ENCODE measurements at regions of chr2 and their contacts with region 1.

Region 1: GRCh38 chr2:205680067-205680466 is 2.2 kb upstream of the NRP2 start:
- DNase-seq: peak in 6 of 7 donors; percentile 60 to 84 (median 70)
- H3K4me3 ChIP-seq: no peak overlapping the region
- H3K27ac ChIP-seq: no peak overlapping the region
- H3K4me1 ChIP-seq: peaks cover 0 to 16% of the 10 kb centered on the region in 2 donors
- H3K27me3 ChIP-seq: no peaks in the 10 kb centered on the region
- CTCF ChIP-seq: peak; percentile 55 to 70 (median 66)
- POLR2A ChIP-seq: no peak

Region 2: DNA sequence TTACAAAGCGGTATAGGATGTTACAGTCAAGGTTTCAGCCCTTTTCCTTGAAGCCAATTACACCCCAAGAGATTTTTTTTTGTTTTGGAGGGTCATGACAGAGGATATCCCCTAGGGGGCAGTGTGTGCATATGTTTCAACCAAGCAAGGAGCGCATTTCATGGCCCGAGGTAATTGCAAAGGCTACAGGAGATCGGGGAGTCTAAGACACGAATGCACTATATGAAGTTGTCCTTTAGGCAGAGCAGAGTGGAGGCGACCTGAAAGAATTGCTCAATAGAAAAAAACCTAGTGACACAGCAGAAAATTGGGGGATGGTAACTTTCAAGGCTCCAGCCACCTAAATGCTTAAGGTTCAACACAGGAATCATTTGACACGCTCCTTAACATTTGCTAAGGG is 1354.6 kb before region 1 on chr2:
- intact Hi-C with region 1: loop called in 1 of 2 experiments (anchors 5 kb)
- DNase-seq: peak; percentile 57 to 81 (median 68)
- H3K4me3 ChIP-seq: no peak overlapping the region
- H3K27ac ChIP-seq: no peak overlapping the region
- H3K4me1 ChIP-seq: no peaks in the 10 kb centered on the region
- H3K27me3 ChIP-seq: no peaks in the 10 kb centered on the region
- CTCF ChIP-seq: peak; percentile 80 to 94 (median 88)
- POLR2A ChIP-seq: no peak

Region 3: GRCh38 chr2:204860274-204860673 is 819.8 kb before region 1 on chr2:
- intact Hi-C with region 1: loop called in 1 of 2 experiments (anchors 10 kb)
- DNase-seq: no peak
- H3K4me3 ChIP-seq: no peak overlapping the region
- H3K27ac ChIP-seq: no peak overlapping the region
- H3K4me1 ChIP-seq: no peaks in the 10 kb centered on the region
- H3K27me3 ChIP-seq: no peaks in the 10 kb centered on the region
- CTCF ChIP-seq: no peak
- POLR2A ChIP-seq: no peak

Region 4: DNA sequence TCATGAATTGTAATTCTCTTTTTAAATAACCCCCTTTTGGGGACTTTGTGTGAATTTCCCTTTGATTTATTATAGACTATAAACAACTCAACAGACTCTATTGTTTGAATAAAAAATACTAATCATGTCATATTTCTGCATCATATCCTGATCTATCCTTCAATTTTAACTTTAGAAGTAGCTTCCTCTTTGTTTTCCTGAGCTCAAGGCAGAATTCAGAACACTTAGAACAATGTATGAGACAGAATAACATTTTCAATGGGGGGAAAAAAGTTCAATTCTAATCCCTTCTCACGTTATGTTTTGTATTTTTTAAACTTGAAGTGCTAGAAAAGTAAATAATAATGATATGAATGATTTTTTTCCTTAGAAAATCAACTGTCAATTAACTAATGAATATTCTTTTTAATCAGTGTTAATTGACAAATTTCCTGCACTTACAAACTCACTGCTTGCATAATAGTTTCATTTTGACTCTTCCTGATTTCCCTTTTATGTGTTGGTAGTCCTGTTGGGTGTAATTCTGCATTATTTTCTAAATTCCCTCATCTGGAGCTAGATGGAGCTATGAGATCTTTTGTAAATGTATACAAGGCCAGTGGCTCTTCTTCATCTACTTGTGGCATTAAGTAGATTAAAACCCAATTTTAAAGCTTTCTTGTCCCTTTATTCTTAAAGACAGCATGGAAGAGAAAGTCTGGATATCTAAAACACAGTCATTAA is 808.7 kb before region 1 on chr2:
- intact Hi-C with region 1: loop called (anchors 10 kb)
- DNase-seq: no peak
- H3K4me3 ChIP-seq: no peak overlapping the region
- H3K27ac ChIP-seq: no peak overlapping the region
- H3K4me1 ChIP-seq: peaks cover 0 to 26% of the 10 kb centered on the region in 2 donors
- H3K27me3 ChIP-seq: no peaks in the 10 kb centered on the region
- CTCF ChIP-seq: peak; percentile 29 to 54 (median 43)
- POLR2A ChIP-seq: no peak

Region 5: DNA sequence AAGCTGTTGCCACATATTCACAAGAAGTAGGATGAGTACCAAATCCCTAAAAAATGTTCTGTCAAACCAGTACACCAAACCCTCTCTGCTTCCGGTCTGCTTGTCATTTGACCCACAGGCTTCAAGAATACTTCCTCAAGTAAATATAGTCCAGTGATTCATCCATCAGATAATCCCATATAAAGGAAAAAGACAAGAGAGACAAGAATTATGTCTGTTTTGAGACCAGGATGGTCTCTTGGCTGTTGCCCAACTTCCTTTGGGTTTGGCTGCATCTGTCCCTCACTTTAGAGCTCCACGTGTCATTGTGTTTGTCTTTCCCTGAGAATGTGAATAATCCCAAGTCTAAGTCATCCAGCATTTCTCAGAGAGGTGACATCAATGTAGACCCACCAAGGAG is 89.3 kb before region 1 on chr2:
- intact Hi-C with region 1: no loop called
- DNase-seq: peak in 4 of 7 donors; percentile 13 to 56 (median 19)
- H3K4me3 ChIP-seq: no peak overlapping the region
- H3K27ac ChIP-seq: no peak overlapping the region
- H3K4me1 ChIP-seq: no peaks in the 10 kb centered on the region
- H3K27me3 ChIP-seq: no peaks in the 10 kb centered on the region
- CTCF ChIP-seq: no peak
- POLR2A ChIP-seq: no peak

Region 6: DNA sequence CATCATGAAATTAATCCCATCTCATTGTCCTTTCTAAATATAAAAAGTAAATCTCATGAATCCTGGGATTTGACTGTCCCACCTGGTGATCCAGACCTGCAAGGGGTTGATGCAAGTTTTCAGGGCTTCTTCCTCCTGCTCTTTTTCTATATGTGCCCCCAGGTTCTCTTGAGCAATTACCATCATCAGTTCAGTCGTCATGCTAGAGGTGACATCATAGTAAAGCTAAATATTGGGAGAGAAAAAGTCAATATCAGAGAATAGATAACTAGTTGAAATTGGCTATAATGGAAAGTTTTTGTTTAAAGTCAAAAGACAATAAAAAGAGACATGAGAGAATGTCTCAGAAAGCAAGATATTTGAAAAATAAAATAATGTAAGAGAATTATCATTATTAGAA is 1076.7 kb after region 1 on chr2:
- intact Hi-C with region 1: no loop called
- DNase-seq: no peak
- H3K4me3 ChIP-seq: no peak overlapping the region
- H3K27ac ChIP-seq: no peak overlapping the region
- H3K4me1 ChIP-seq: no peaks in the 10 kb centered on the region
- H3K27me3 ChIP-seq: no peaks in the 10 kb centered on the region
- CTCF ChIP-seq: no peak
- POLR2A ChIP-seq: no peak

Measured in adrenal gland (tissue), 19 donors.